ENCODE measurements at regions of chr4 and their contacts with region 1.

Region 1: DNA sequence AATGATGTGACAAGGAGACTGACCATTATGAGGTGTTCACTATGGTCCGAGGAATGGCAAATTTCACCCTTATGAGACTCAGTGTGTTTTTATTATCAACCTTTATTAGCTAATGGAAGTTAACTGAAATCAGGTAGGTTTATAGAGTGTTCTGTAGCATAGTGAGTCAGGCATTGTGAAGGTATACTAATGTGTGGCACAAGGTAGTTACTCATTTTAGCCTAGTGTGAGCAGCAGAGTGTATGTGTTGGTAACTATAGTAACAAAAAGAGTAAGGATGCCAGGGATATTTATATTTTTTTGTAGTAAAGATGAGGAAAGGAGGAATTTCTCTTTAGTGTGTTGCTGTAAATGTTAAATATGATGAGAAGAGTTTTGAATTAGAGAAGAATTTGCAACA is 12.0 kb downstream of the PDLIM5 start:
- DNase-seq: no peak
- ATAC-seq: peak; percentile 44
- H3K4me3 ChIP-seq: no peak overlapping the region
- H3K27ac ChIP-seq: no peak overlapping the region
- H3K4me1 ChIP-seq: peaks cover 41% of the 10 kb centered on the region
- H3K27me3 ChIP-seq: no peaks in the 10 kb centered on the region
- CTCF ChIP-seq: no peak

Region 2: DNA sequence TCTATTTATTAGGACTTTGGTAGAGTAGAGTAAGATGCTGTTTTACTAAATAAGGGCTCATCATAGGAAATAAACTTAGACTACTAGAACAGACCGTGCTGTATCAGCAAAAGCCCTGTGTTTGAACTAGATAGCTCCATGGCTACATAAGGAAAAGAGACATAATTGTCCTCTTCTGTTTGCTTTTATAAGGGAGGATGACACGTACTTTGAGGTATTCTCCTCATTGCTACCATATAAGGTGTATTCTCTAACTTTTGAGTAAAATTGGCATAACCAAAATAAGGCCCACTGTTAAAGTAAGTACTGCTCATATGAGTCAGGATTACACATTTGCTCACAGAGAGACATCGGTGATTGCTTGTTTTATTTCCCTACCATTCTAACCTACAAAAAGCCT is 52.3 kb after region 1 on chr4:
- CTCF ChIA-PET with region 1: no interaction called
- POLR2A ChIA-PET with region 1: no interaction called
- intact Hi-C with region 1: loop called (anchors 5 kb)
- DNase-seq: peak; percentile 79
- ATAC-seq: peak; percentile 89
- H3K4me3 ChIP-seq: no peak overlapping the region
- H3K27ac ChIP-seq: peak overlapping the region; percentile 89
- H3K4me1 ChIP-seq: peaks cover 29% of the 10 kb centered on the region
- H3K27me3 ChIP-seq: no peaks in the 10 kb centered on the region
- CTCF ChIP-seq: no peak

Measured in PC-3 (cell line).